ENCODE measurements at regions of chr2 and their contacts with region 1.

Region 1: GRCh38 chr2:169109502-169110409 is 40.4 kb downstream of the DHRS9 start:
- DNase-seq: peak; percentile 64 to 93 (median 85)

Region 2: DNA sequence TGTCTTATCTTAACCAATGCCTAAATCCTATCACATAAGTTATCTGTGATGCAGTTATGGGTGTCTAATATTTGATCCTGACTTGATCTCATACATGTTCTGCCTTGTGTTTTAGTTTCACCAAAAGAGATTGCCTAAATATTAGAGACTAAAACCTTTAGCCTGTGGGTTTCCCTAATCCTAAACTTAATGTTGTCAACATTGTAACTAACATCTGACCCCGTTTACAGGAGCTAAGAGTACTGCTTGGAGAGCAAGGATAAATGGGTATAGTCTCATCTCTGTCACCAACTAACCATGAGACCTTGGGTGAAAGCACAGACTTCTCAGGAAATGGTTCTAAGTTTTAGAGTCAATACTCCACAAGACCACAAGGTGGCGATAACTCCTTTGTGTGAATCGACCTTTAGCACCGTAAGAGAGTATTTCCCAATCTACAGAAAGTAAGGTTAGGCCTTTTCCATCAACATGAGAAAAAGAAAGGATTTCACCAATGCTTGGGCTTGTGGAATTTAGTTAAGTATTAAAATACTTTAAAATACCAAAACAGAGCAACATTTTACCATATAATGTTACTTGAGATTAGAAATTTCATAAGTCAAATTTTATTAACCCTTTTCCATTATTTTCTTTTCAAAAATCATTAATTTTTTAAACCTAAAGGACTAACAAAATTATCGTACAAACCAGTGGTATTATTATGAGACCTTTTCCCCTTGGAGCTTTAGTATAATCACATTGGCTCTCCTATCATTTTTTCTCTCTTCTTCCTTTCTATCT is 148.1 kb before region 1 on chr2:
- intact Hi-C with region 1: loop called (anchors 10 kb)
- DNase-seq: peak in 21 of 42 donors; percentile 4 to 73 (median 40)

Region 3: GRCh38 chr2:169397697-169398096 is 287.9 kb after region 1 on chr2:
- intact Hi-C with region 1: loop called (anchors 10 kb)
- DNase-seq: peak in 5 of 42 donors; percentile 4 to 35 (median 18)

Region 4: GRCh38 chr2:169479257-169480078 is 369.7 kb after region 1 on chr2 and contains the start of gene BBS5:
- intact Hi-C with region 1: no loop called
- DNase-seq: peak; percentile 83 to 95 (median 90)

Measured in head of caudate nucleus (tissue), 42 donors.